CD4-positive, alpha-beta T cell (primary cell): ENCODE measurements at regions of chr6 and their contacts with region 1.

Region 1: DNA sequence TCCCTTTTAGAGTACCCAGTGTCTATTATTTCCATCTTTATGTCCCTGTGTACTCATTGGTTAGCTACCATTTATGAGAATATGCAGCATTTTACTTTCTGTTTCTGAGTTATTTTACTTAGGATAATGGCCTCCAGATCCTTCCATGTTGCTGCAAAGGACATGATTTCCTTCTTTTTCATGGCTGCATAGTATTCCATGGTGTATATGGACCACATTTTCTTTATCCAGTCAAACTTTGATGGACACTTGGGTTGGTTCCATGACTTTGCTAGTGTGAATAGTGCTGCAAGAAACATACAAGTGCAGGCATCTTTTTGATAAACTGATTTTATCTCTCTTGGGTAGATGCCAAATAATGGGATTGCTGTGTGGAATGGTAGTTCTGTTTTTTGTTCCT is 55.4 kb downstream of the ZBTB2 start:
- DNase-seq: no peak
- ATAC-seq: no peak
- H3K4me3 ChIP-seq: no peak overlapping the region
- H3K4me3 Mint-ChIP-seq: no peak overlapping the region
- H3K27ac ChIP-seq: no peak overlapping the region
- H3K27ac Mint-ChIP-seq: no peak overlapping the region
- H3K4me1 ChIP-seq: peaks cover 2% of the 10 kb centered on the region
- H3K4me1 Mint-ChIP-seq: peaks cover 5% of the 10 kb centered on the region
- H3K27me3 ChIP-seq: no peaks in the 10 kb centered on the region
- H3K27me3 Mint-ChIP-seq: no peaks in the 10 kb centered on the region
- CTCF ChIP-seq: no peak

Region 2: GRCh38 chr6:150891888-150892485 is 443.9 kb before region 1 on chr6:
- CTCF ChIA-PET with region 1: interaction called, 10 read pairs
- POLR2A ChIA-PET with region 1: interaction called, 4 read pairs
- intact Hi-C with region 1: no loop called
- DNase-seq: peak; percentile 30 to 74 (median 50)
- ATAC-seq: peak; percentile 71
- H3K4me3 ChIP-seq: no peak overlapping the region
- H3K4me3 Mint-ChIP-seq: no peak overlapping the region
- H3K27ac ChIP-seq: no peak overlapping the region
- H3K27ac Mint-ChIP-seq: no peak overlapping the region
- H3K4me1 ChIP-seq: peaks cover 7% of the 10 kb centered on the region
- H3K4me1 Mint-ChIP-seq: peaks cover 19% of the 10 kb centered on the region
- H3K27me3 ChIP-seq: no peaks in the 10 kb centered on the region
- H3K27me3 Mint-ChIP-seq: no peaks in the 10 kb centered on the region
- CTCF ChIP-seq: peak; percentile 91